Activated CD4-positive, alpha-beta memory T cell treated with anti-CD3 and anti-CD28 coated beads, Interleukin-2, amount 10 ng/mL, durations not matched to agents 7 days and 5 days (primary cell): ENCODE measurements at regions of chr17 and their contacts with region 1.

Region 1: GRCh38 chr17:67376737-67377487 is at the start of gene PITPNC1:
- DNase-seq: peak; percentile 90
- H3K4me3 Mint-ChIP-seq: peak within 1 kb of the TSS; percentile 86
- H3K27ac Mint-ChIP-seq: peak within 1 kb of the TSS; percentile 78
- H3K4me1 Mint-ChIP-seq: peaks cover 36% of the 10 kb centered on the region
- H3K27me3 Mint-ChIP-seq: peaks cover 6% of the 10 kb centered on the region
- total RNA-seq, gene PITPNC1: 29.1 to 31.1 TPM

Region 2: DNA sequence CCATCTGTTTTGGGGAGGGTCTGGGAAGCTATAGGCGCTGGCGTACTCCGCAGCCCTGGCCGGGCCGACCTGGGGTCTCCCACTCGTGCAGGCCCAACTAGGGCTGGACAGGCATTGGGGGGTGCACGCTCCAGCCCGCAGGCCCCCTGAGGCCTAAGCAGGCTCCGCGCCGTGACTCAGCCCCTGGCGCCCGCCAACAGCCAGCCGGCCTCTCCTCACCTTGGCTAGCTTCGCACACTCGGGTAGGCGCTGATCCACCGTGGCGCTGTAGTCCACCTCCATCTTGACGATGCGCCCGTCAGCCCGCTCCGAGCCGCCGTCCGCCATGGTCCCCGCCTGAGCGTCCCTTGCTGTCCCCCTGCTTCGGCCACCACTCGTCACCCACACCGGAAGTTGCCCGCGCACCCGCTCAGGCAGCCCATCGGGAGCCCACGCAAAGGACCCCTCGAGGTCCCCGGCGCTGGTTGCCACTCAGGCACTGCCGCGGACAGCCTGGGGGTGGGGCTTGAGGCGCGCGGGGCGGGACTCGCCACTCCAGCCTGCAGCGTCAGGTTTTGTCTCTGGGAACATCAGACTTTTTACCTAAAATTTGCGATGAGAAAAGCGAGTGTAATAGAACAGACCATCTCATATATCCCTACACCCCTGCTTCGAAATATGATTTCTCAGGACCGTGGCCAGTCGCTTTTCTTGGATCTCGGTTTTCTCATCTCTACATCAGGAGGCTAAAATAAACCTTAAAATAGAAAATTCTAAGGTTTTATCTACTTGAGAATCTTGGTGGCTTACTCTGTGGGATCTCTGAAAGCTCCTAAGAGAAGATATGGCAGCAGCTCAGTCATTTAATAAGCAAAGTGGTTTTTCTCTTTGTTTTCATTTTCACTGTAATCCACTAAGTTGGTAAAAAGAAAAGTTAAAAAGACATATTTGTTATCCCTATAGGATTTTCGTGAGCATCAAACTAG is 10.4 kb before region 1 on chr17 and contains the start of gene PSMD12:
- CTCF ChIA-PET with region 1: interaction called, 72 read pairs
- POLR2A ChIA-PET with region 1: interaction called, 76 read pairs
- DNase-seq: peak; percentile 94
- H3K4me3 Mint-ChIP-seq: peak within 1 kb of the TSS; percentile 99
- H3K27ac Mint-ChIP-seq: peak within 1 kb of the TSS; percentile 96
- H3K4me1 Mint-ChIP-seq: peaks cover 49% of the 10 kb centered on the region
- H3K27me3 Mint-ChIP-seq: peaks cover 2% of the 10 kb centered on the region
- total RNA-seq, gene PSMD12: 49.3 to 50.0 TPM

Region 3: GRCh38 chr17:67421869-67422273 is 45.0 kb after region 1 on chr17:
- CTCF ChIA-PET with region 1: interaction called, 5 read pairs
- POLR2A ChIA-PET with region 1: interaction called, 10 read pairs
- DNase-seq: peak; percentile 64
- H3K4me3 Mint-ChIP-seq: no peak overlapping the region
- H3K27ac Mint-ChIP-seq: peak overlapping the region; percentile 83
- H3K4me1 Mint-ChIP-seq: peaks cover 51% of the 10 kb centered on the region
- H3K27me3 Mint-ChIP-seq: no peaks in the 10 kb centered on the region

Region 4: GRCh38 chr17:67452681-67453554 is 76.0 kb after region 1 on chr17:
- CTCF ChIA-PET with region 1: interaction called, 14 read pairs
- POLR2A ChIA-PET with region 1: interaction called, 18 read pairs
- DNase-seq: peak; percentile 39
- H3K4me3 Mint-ChIP-seq: peak overlapping the region; percentile 59
- H3K27ac Mint-ChIP-seq: peak overlapping the region; percentile 95
- H3K4me1 Mint-ChIP-seq: peaks cover 62% of the 10 kb centered on the region
- H3K27me3 Mint-ChIP-seq: peaks cover 2% of the 10 kb centered on the region

Region 5: DNA sequence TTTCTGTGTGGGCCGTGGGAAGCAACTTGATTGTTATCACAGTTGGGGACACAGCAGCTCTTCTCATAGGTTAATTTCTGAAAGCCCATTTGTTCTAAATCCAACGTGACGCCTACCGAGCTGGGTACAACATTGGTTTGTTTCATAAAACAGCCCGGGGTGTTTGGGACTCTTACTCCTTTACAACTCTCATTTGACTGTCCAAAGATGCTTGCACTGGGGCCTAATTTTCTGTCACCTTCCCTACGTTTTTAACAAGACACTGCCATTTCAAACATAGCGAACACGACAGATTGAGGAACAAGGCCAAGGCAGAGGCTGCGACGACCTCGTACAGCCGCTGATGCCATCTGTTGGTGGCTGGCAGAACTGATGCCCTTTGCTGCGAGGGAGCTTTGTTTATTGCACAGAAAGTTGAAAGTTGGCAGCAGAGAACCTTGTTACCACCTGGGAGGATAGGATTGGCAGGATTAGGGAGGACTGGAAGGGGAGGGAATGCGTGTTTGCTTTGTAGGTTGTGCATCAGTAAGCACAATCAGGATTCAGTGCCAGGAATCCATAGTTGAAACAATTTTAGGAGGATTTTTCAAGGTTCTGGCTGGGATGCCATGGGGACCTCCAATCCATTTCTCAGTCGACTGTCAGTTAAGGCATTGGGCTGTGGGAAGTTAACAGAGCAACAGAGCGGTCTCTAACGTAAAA is 98.5 kb after region 1 on chr17:
- CTCF ChIA-PET with region 1: interaction called, 138 read pairs
- POLR2A ChIA-PET with region 1: interaction called, 86 read pairs
- DNase-seq: peak; percentile 88
- H3K4me3 Mint-ChIP-seq: peak overlapping the region; percentile 46
- H3K27ac Mint-ChIP-seq: peak overlapping the region; percentile 82
- H3K4me1 Mint-ChIP-seq: peaks cover 45% of the 10 kb centered on the region
- H3K27me3 Mint-ChIP-seq: peaks cover 2% of the 10 kb centered on the region

Region 6: GRCh38 chr17:67629971-67630320 is 253.0 kb after region 1 on chr17:
- CTCF ChIA-PET with region 1: interaction called, 11 read pairs
- POLR2A ChIA-PET with region 1: no interaction called
- DNase-seq: no peak
- H3K4me3 Mint-ChIP-seq: no peak overlapping the region
- H3K27ac Mint-ChIP-seq: no peak overlapping the region
- H3K4me1 Mint-ChIP-seq: no peaks in the 10 kb centered on the region
- H3K27me3 Mint-ChIP-seq: no peaks in the 10 kb centered on the region

Region 7: DNA sequence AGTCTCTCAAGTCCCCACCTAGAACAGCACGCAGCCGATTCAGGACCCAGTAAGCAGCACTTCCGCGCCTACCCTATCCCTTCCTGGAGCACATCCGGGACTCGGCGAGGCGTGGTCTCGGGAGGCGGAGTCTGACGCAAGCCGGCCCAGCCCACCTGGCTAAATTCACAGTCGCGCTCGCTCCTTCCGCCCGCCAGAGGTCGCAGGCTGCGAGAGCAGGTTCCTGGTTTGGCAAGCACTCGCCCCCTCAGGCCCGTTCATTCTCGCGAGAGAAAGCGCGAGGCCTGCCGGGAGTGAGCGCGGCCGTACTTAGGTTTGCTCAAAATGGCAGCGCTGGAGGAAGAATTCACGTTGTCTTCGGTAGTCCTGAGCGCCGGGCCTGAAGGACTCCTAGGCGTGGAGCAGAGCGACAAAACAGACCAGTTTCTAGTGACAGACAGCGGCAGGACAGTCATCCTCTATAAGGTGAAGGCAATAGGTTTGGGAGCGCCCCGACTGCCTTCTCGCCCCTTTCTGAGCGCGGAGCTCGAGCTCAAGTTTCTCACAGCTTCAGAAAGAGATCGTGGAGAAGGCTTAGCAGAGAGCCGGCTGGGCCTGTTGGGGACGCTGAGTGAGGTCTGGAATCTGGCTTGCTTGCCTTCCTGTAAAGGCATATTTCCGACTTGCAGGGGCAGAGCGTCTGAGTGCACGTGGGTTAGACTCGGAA is 340.9 kb after region 1 on chr17 and contains the start of gene NOL11:
- CTCF ChIA-PET with region 1: interaction called, 12 read pairs
- POLR2A ChIA-PET with region 1: interaction called, 16 read pairs
- DNase-seq: peak; percentile 100
- H3K4me3 Mint-ChIP-seq: peak within 1 kb of the TSS; percentile 94
- H3K27ac Mint-ChIP-seq: peak within 1 kb of the TSS; percentile 93
- H3K4me1 Mint-ChIP-seq: peaks cover 24% of the 10 kb centered on the region
- H3K27me3 Mint-ChIP-seq: no peaks in the 10 kb centered on the region
- total RNA-seq, gene NOL11: 33.2 to 34.4 TPM